ENCODE measurements at regions of chr13 and their contacts with region 1.

Region 1: GRCh38 chr13:109275852-109276251 is 510.5 kb downstream of the IRS2 start:
- DNase-seq: no peak
- H3K4me3 ChIP-seq: no peak overlapping the region
- H3K27ac ChIP-seq: no peak overlapping the region
- H3K4me1 ChIP-seq: peaks cover 27% of the 10 kb centered on the region
- H3K27me3 ChIP-seq: no peaks in the 10 kb centered on the region
- CTCF ChIP-seq: no peak
- POLR2A ChIP-seq: no peak

Region 2: GRCh38 chr13:109156181-109156935 is 119.5 kb before region 1 on chr13:
- CTCF ChIA-PET with region 1: interaction called, 8 read pairs
- POLR2A ChIA-PET with region 1: interaction called, 4 read pairs
- dilution Hi-C with region 1: no loop called
- intact Hi-C with region 1: loop called (anchors 1 kb)
- DNase-seq: peak; percentile 91
- H3K4me3 ChIP-seq: no peak overlapping the region
- H3K27ac ChIP-seq: peak overlapping the region; percentile 87
- H3K4me1 ChIP-seq: peaks cover 39% of the 10 kb centered on the region
- H3K27me3 ChIP-seq: no peaks in the 10 kb centered on the region
- CTCF ChIP-seq: no peak
- POLR2A ChIP-seq: no peak

Region 3: DNA sequence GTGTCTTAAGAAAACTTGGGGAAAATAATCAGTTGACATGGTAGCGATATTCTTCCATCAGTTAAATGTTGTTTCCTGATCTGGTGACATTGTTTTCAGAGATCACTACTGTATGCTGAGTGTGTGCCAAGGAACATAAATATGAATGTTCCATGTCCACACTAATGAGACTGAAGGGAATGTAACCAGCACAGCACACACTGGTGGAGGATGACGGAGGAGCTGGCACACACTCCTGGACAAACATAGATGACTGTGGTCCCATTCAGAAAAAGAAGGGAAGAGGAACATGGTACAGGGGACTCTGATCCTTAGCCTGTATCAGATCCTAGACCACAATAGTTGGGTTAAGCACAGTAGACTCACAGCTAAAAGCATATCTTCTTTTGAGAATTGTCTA is 71.6 kb before region 1 on chr13:
- CTCF ChIA-PET with region 1: interaction called, 3 read pairs
- POLR2A ChIA-PET with region 1: no interaction called
- dilution Hi-C with region 1: no loop called
- intact Hi-C with region 1: loop called (anchors 1 kb)
- DNase-seq: peak; percentile 82
- H3K4me3 ChIP-seq: no peak overlapping the region
- H3K27ac ChIP-seq: peak overlapping the region; percentile 20
- H3K4me1 ChIP-seq: peaks cover 35% of the 10 kb centered on the region
- H3K27me3 ChIP-seq: no peaks in the 10 kb centered on the region
- CTCF ChIP-seq: no peak
- POLR2A ChIP-seq: no peak

Region 4: DNA sequence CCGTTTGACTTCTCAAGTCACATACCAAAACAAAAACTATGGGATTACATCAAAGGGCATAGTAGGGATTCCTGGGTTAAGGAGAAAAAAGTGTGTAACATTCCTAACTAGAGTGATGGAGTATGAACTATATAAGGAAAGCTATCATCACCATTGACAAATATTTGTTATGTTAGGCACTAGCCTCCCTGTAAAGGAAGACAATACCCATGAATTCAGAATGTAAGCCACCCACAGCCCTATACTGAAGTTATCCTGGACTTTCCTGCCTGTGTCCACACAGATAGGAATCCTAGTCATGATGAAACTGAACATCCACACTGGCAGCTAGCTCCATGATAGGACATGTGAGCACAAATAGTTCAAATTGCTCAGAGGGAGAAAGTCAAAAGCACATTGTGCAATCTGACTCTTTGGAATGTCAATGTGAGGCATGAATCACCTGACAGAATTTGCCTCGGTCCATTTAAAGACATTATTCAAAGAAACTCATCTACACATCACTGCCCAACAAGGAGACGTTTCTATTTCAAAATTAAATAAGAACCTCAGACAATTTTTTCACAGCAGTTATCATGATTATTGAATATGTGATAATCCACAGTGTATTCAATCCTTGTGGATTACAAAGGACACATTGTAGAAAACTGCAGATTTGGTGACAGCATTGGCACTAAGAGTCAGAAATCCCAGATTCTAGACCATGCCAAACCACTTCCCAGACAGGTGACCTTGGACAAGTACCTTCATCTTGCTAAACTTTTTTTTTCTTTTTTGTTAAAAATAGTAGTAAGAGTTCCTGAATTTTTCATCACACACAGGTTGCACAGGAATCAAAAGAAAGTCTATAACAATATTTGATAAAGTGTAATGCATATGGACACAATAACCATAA is 18.7 kb before region 1 on chr13:
- CTCF ChIA-PET with region 1: interaction called, 4 read pairs
- POLR2A ChIA-PET with region 1: no interaction called
- dilution Hi-C with region 1: no loop called
- intact Hi-C with region 1: loop called (anchors 2 kb)
- DNase-seq: peak; percentile 42
- H3K4me3 ChIP-seq: no peak overlapping the region
- H3K27ac ChIP-seq: no peak overlapping the region
- H3K4me1 ChIP-seq: peaks cover 1% of the 10 kb centered on the region
- H3K27me3 ChIP-seq: no peaks in the 10 kb centered on the region
- CTCF ChIP-seq: no peak
- POLR2A ChIP-seq: no peak

Region 5: GRCh38 chr13:110126391-110126961 is 850.6 kb after region 1 on chr13:
- CTCF ChIA-PET with region 1: no interaction called
- POLR2A ChIA-PET with region 1: no interaction called
- dilution Hi-C with region 1: no loop called
- intact Hi-C with region 1: loop called (anchors 2 kb)
- DNase-seq: peak; percentile 98
- H3K4me3 ChIP-seq: peak overlapping the region in 1 of 3 experiments; percentile 9
- H3K27ac ChIP-seq: peak overlapping the region; percentile 92
- H3K4me1 ChIP-seq: peaks cover 50% of the 10 kb centered on the region
- H3K27me3 ChIP-seq: no peaks in the 10 kb centered on the region
- CTCF ChIP-seq: no peak
- POLR2A ChIP-seq: peak; percentile 43

Measured in endothelial cell of umbilical vein (primary cell).